Aorta (tissue), 5 donors: ENCODE measurements at regions of chr1 and their contacts with region 1.

Region 1: DNA sequence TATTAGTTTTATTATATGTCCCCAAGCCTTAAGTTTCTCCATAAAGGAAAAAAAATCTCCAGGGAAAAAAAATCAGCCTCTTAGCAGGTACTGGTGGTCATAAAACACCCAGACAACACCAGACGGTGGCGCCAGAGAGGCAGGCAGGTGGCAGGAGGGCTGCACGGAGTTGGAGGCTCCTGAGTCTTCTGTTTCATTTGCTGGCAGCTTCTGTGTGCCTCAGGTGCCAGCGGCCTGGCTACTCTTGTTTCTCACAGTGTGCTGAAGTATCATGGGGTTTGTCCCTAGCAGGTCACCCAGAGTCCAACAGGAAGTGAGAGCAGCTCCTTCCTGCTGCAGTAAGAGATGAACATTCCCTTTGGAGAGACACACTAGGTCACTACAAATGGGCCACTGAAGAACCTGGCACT is 123.3 kb upstream of the GADD45A start:
- DNase-seq: peak; percentile 95 to 97
- ATAC-seq: peak; percentile 80
- H3K4me3 ChIP-seq: no peak overlapping the region
- H3K27ac ChIP-seq: no peak overlapping the region
- H3K4me1 ChIP-seq: no peaks in the 10 kb centered on the region
- H3K27me3 ChIP-seq: no peaks in the 10 kb centered on the region

Region 2: DNA sequence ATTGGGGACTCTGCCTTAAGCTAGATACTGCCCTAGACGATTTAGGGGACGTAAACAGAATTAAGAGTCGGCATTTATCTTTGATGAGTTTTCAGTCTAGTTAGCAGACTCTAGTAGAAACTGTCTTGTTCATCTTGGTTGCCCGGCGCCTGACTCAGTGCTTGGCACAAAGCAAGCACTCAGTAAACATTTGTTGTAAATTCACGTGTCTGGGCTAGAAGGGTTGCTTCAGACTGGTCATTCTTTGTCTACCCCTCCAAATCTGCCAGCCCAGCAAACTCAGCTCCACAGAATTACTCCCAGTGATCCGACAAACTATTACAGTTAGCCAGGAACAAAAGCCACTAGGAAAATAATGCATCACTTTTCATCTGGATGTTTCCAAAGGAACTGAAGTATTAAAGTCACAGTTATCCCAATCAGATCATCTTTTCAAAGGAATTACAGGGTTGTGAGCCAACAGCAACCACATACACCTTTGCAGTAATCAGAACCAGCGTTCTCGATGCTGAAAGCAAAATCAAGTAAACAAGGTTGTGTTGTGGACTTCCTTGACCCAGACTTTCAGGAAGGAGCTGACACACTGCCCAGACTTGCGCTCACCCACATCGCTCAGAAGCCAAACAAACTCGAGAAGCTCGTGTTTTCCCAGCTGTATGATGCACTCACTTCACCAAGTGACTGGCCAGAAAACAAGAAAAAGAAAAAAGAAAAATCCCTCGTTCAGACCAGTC is 56.7 kb after region 1 on chr1:
- intact Hi-C with region 1: loop called (anchors 2 to 5 kb)
- DNase-seq: peak; percentile 80 to 83
- ATAC-seq: peak; percentile 93
- H3K4me3 ChIP-seq: peak overlapping the region; percentile 17 to 26
- H3K27ac ChIP-seq: peak overlapping the region; percentile 84 to 95
- H3K4me1 ChIP-seq: peaks cover 0 to 12% of the 10 kb centered on the region in 2 donors
- H3K27me3 ChIP-seq: no peaks in the 10 kb centered on the region

Region 3: DNA sequence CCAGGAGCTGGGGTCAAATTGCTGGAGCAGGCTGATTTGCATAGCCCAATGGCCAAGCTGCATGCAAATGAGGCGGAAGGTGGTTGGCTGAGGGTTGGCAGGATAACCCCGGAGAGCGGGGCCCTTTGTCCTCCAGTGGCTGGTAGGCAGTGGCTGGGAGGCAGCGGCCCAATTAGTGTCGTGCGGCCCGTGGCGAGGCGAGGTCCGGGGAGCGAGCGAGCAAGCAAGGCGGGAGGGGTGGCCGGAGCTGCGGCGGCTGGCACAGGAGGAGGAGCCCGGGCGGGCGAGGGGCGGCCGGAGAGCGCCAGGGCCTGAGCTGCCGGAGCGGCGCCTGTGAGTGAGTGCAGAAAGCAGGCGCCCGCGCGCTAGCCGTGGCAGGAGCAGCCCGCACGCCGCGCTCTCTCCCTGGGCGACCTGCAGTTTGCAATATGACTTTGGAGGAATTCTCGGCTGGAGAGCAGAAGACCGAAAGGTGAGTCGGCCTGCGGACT is 123.4 kb after region 1 on chr1 and contains the start of gene GADD45A:
- intact Hi-C with region 1: loop called (anchors 2 to 5 kb)
- DNase-seq: peak; percentile 99
- ATAC-seq: peak; percentile 95
- H3K4me3 ChIP-seq: peak within 1 kb of the TSS; percentile 80 to 96
- H3K27ac ChIP-seq: peak within 1 kb of the TSS; percentile 87 to 95
- H3K4me1 ChIP-seq: peaks cover 0 to 5% of the 10 kb centered on the region in 2 donors
- H3K27me3 ChIP-seq: no peaks in the 10 kb centered on the region
- total RNA-seq, gene GADD45A: 49.7 to 158 TPM

Region 4: DNA sequence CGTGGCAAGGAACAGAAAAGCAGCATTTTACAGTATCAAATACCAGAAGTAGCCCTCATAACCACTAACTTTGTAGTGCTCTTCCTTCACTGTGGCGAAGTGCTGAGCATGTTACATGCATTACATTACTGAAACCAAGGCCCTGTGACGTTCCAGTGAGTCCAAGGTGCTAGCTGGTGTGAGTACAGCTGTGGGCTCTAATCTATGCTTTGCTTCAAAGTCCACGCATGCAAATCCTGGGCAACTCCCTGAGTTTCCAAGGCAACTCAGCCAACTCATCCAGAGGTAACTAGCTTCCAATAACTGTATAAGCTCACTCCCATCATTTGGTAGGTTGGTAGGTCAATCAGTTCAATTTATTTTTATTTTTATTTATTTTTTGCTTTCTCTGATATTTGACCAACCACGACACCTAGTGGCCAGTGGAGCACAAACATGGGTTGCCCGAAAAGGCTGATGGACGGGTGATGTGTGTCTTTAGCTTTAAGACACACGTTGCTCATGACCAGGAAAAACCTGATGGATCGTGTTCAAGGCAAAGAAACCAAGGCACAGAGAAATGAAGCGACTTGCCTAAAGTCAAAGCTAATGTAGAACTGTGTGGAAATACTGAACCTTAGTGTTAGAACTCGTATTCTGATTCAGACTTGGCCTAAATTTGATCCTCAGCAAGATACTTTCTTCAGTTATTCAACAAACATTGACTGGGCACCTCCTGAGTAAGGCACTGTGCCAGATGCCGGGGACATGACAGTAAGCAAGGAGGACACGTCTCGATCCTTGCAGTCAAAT is 198.5 kb after region 1 on chr1:
- intact Hi-C with region 1: loop called (anchors 2 to 5 kb)
- DNase-seq: peak in 1 of 2 donors; percentile 60
- ATAC-seq: peak; percentile 82
- H3K4me3 ChIP-seq: no peak overlapping the region
- H3K27ac ChIP-seq: peak overlapping the region in 1 of 2 donors; percentile 80
- H3K4me1 ChIP-seq: peaks cover 0 to 2% of the 10 kb centered on the region in 2 donors
- H3K27me3 ChIP-seq: no peaks in the 10 kb centered on the region

Region 5: GRCh38 chr1:68321084-68321685 is 759.5 kb after region 1 on chr1:
- intact Hi-C with region 1: no loop called
- DNase-seq: peak; percentile 76 to 88
- ATAC-seq: peak; percentile 84
- H3K4me3 ChIP-seq: no peak overlapping the region
- H3K27ac ChIP-seq: no peak overlapping the region
- H3K4me1 ChIP-seq: no peaks in the 10 kb centered on the region
- H3K27me3 ChIP-seq: no peaks in the 10 kb centered on the region